ENCODE measurements at regions of chr1 and their contacts with region 1.

Region 1: DNA sequence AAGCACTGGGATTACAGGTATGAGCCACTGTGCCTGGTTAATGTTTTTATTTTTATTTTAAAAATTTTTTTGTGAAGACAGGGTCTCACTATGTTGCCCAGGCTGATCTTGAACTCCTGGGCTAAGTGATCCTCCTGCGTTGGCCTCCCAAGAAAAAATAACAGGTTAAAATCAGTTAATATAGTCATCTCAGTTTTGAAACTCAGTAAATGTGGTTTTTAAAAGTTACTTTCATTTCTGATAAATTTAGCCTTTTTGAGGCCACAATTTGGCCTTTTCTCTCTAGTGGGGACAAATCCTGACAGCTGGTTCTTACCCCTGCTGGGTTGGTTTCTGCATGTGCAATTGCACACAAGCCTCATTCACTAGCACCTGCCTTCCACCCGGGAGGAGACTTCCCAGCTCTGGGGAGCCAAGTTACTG is 13.3 kb downstream of the PMF1 start:
- DNase-seq: no peak
- ATAC-seq: no peak

Region 2: DNA sequence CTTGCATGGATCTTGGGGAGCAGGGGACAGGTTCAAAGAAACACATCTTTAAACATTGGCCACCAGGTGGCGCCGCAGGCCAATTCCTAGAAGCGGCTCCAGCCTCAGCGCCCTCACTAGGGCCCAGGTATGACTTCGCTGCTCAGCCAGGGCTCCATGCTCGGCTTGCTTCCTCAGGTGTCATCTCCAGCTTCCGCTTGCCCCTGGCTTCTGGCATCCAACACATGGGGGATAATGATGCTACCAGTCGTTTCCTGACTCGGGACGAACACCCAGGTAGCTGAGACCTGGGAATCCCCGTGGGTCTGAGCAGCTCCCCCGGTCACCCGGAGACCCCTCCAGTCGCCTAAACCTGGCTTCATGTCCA is 135.3 kb before region 1 on chr1:
- intact Hi-C with region 1: loop called (anchors 1 to 5 kb)
- DNase-seq: peak; percentile 88
- ATAC-seq: peak; percentile 84 to 90

Region 3: DNA sequence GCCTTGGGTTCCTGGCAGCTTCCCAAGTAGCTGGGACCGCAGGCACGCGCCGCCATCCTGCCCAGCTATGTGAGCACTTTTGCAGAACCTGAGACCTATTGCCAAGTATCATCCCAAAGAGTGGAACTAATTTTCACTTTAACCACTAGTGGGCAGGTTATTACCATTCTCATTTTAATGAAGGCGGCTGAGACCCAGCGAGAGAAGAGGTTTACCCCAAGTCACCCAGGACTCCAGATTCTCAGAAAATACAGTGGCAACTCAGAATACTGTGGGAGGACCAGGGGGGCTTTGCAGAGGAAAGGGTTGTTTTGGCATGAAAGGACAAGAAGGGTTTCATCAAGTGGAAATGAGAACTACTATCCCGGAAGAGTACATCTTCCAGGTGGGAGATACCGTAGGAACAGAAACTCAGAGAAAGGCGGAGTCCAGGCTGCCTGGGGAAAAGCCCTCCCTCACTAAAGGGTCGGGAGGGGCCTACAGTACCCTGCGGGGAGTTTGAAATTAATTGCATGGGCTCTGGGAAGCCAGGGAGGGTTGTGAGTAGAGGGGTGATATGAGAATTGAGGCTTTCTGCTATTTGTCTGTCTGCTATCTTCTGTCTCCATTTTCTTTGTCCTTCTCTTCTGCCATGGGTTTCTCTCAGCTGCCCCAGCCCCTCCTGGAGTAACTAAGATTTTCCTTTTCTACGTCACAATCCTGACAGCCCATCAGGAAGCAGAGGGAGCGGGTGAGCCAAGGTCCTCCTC is 79.9 kb before region 1 on chr1:
- intact Hi-C with region 1: loop called (anchors 1 to 5 kb)
- DNase-seq: peak; percentile 75
- ATAC-seq: peak; percentile 21 to 60

Measured in left cardiac atrium (tissue), 4 donors.